ENCODE measurements at regions of chr14 and their contacts with region 1.

Region 1: DNA sequence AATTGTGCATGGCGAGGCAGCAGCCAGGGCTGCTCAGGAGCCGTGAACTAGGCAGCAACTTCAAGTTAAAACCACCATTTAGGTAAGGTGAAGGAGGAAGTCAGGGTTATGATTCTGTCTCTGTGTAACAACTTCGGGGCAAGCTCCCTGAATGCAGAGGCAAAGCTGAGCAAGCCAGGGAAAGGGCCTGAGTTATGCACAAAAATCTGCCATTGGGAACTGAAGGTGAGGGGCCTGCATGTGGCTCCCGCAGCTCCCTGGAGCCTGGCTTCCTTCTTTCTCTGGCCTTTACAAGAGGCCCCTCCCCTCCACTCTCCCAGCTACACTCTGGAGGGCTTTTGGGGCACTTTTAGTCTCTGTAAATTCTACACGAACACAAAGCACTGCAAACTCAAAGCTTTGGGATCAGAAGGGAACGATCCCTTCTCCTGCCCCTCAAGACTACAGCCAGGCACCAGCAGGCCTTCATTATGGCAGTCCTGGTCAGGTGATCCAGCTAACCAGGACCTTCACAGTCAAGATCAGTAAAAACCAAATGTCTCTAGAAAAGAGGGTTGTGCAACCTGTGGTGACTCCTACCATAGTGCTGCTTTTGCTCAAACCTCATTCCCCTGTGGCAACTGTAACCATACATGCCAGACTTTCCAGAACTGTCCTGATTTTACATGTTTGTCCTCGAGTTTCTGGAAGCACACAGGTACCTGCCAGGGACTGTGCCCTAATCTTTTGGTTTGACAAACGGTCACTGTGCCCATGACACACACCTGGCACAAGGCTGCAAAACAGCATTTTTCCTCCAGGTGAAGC is 67.2 kb upstream of the PTGR2 start:
- DNase-seq: no peak
- H3K4me3 ChIP-seq: no peak overlapping the region
- CTCF ChIP-seq: no peak

Region 2: GRCh38 chr14:73746520-73747378 is 37.6 kb before region 1 on chr14:
- in situ Hi-C with region 1: loop called (anchors 5 kb)
- DNase-seq: no peak
- H3K4me3 ChIP-seq: no peak overlapping the region
- CTCF ChIP-seq: peak; percentile 38

Measured in astrocyte of the cerebellum (primary cell).